IMR-90 (cell line): ENCODE measurements at regions of chr9 and their contacts with region 1.

Region 1: DNA sequence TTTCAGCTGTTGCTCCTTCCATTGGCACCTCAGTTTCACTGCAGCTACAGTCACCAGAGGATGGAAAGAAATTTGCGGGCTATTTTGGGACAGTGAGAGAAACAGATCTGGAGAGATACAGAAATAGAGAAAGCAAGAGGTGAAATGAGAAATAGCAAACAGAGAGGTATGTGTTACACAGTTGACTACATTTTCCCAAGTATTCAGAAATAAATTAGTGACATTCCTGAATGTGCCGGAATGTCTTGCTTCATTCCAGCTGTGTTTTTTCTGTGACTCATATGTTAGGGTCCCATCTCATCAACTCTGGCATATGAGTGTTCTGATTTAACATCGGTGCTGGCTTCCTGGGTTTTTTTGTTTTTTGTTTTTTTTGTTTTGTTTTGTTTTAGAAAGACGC is 63.8 kb upstream of the ZNF462 start:
- DNase-seq: peak; percentile 79
- ATAC-seq: peak; percentile 92
- H3K4me3 ChIP-seq: no peak overlapping the region
- H3K27ac ChIP-seq: no peak overlapping the region
- H3K4me1 ChIP-seq: 0 out of 2 replicates have a peak, but pooled peaks cover 3% of the 10 kb centered on the region
- H3K27me3 ChIP-seq: no peaks in the 10 kb centered on the region
- CTCF ChIP-seq: no peak
- POLR2A ChIP-seq: no peak
- RAD21 ChIP-seq: no peak

Region 2: DNA sequence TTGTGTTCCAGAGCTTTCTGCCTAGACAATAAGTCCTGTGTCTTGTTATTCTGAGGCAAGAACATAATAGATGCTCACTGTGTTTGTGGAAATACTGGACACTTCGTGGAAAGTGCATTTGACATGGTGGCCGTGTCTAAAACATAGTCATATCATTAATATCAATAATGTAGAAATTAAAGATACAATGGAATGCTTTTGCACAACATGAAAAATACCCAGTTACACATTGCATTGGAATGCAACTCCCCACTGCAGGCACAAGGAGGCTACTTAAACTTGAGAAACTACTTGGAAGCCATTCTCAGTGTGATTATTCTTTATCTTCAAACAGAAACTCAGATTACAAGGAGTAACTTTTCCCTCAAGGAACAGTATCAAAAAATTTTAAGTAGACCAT is 81.5 kb before region 1 on chr9:
- CTCF ChIA-PET with region 1: interaction called, 3 read pairs
- POLR2A ChIA-PET with region 1: no interaction called
- dilution Hi-C with region 1: no loop called
- in situ Hi-C with region 1: no loop called
- intact Hi-C with region 1: loop called (anchors 2 kb)
- DNase-seq: peak; percentile 80
- ATAC-seq: peak; percentile 86
- H3K4me3 ChIP-seq: no peak overlapping the region
- H3K27ac ChIP-seq: peak overlapping the region; percentile 64; the same call in 1 of the 2 replicates
- H3K4me1 ChIP-seq: no peaks in the 10 kb centered on the region
- H3K27me3 ChIP-seq: no peaks in the 10 kb centered on the region
- CTCF ChIP-seq: no peak
- POLR2A ChIP-seq: no peak
- RAD21 ChIP-seq: no peak

Region 3: GRCh38 chr9:106834888-106835287 is 35.7 kb after region 1 on chr9:
- CTCF ChIA-PET with region 1: no interaction called
- POLR2A ChIA-PET with region 1: no interaction called
- dilution Hi-C with region 1: no loop called
- in situ Hi-C with region 1: no loop called
- intact Hi-C with region 1: no loop called
- DNase-seq: no peak
- ATAC-seq: no peak
- H3K4me3 ChIP-seq: no peak overlapping the region
- H3K27ac ChIP-seq: no peak overlapping the region
- H3K4me1 ChIP-seq: no peaks in the 10 kb centered on the region
- H3K27me3 ChIP-seq: peaks cover 1% of the 10 kb centered on the region; the same call in 1 of the 2 replicates
- CTCF ChIP-seq: no peak
- POLR2A ChIP-seq: no peak
- RAD21 ChIP-seq: no peak